ENCODE measurements at regions of chr13 and their contacts with region 1.

Region 1: GRCh38 chr13:51286135-51287002 is 53.1 kb upstream of the SERPINE3 start:
- DNase-seq: peak; percentile 92

Region 2: GRCh38 chr13:51148952-51149573 is 137.3 kb before region 1 on chr13:
- intact Hi-C with region 1: loop called (anchors 5 kb)
- DNase-seq: no peak

Region 3: DNA sequence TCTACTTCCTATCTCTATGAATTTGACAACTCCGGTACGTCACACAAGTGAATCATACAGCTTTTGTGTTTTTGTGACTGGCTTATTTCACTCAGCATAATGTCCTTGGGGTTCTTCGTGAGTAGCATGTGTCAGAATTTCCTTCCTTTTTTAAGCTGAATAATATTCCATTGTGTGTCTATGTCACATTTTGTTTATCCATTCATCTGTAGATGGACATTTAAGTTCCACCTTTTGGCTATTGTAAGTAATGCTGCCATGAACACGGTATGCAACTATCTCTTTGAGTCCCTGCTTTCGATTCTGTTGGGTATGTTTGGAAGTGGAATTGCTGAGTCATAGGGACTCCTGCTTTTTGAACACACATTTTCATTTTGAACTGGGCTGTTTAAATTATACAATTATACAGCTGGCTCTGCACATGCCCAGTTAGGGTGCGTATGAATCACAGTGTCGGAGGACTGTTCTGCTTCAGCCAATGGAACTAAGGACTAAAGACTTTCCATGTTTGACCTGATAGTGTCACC is 132.3 kb before region 1 on chr13:
- intact Hi-C with region 1: loop called (anchors 5 kb)
- DNase-seq: no peak

Region 4: GRCh38 chr13:51222037-51222685 is 64.2 kb before region 1 on chr13 and contains the start of gene FAM124A:
- intact Hi-C with region 1: loop called in 1 of 2 experiments (anchors 5 kb)
- DNase-seq: no peak
- total RNA-seq, gene FAM124A: 6.2 to 9.8 TPM

Region 5: GRCh38 chr13:51258612-51259548 is 27.5 kb before region 1 on chr13:
- intact Hi-C with region 1: loop called in 1 of 2 experiments (anchors 2 kb)
- DNase-seq: peak; percentile 68

Region 6: DNA sequence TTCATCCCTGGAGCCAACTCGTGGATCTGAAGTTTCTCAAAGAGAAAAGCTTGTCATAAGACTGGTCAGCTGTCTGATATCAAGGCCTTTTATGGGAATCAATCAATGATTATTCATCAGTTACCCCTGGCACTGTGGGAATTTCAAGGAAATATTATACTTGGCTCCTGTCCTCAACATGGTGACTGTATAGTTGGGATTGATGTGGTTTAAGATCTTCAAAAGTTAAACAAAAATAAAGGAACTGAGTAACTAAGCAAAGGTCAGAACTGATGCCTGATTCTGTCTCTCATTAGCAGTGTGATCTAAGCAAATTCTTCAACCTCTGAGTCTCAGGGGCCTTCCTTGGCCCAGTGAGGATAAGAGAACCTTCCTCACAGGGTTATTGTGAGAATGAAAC is 30.9 kb after region 1 on chr13:
- intact Hi-C with region 1: no loop called
- DNase-seq: no peak

Region 7: DNA sequence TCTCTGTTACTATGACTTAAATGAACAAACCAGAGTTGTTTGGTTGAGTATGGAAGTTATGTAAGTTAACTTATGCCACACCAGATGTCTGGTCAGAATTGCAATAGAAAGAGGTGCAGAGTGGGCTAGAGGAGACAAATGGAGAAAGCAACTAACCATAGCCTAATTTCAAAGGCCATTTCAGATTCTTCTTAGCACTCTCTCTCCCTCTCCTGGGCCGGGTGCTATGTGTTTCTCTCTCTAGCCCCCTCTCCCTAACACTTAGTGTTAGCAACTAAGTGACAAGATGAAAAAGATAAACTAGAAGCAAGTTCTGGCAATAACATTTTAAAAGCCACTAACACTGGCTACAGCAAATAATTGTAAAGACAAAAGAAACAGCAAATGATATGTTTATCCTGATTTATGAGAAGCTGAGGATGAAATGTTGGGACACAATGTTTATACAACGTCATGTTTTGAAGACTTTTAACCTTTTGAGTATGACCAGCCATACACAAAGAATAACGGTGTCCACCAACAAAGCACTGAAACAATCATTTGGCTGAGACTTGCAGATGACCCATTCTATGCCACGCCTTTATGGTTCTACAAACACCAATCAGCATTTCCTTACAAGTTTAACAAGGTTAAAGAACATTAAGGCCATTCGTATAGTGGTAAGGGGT is 71.7 kb after region 1 on chr13:
- intact Hi-C with region 1: no loop called
- DNase-seq: no peak